ENCODE measurements at regions of chr15 and their contacts with region 1.

Region 1: GRCh38 chr15:34367101-34368081 is at the start of gene LPCAT4:
- DNase-seq: peak; percentile 87 to 93
- ATAC-seq: peak; percentile 94 to 96 (median 96)
- H3K4me3 ChIP-seq: peak within 1 kb of the TSS; percentile 98
- H3K27ac ChIP-seq: peak within 1 kb of the TSS; percentile 97
- H3K4me1 ChIP-seq: peaks cover 9% of the 10 kb centered on the region
- H3K27me3 ChIP-seq: no peaks in the 10 kb centered on the region
- CTCF ChIP-seq: peak; percentile 95
- total RNA-seq, gene LPCAT4: 8.4 to 13.1 (median 10.2) TPM

Region 2: DNA sequence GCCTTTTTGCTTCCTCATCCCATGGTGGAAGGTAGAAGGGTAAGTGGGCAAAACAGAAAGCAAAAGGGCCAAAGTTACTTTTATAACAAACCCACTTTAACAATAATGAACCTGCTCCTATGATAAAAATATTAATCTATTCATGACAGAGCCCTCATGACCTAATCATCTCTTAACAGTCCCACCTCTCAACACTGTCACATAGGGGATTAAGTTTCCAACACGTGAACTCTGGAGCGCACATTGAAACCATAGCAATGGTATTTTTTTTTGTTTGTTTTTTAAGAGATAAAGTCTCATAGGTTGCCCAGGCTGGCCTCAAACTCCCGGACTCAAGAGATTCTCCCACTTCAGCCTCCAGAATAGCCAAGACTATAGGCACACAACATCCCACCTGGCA is 188.2 kb before region 1 on chr15:
- intact Hi-C with region 1: no loop called
- DNase-seq: no peak
- ATAC-seq: no peak
- H3K4me3 ChIP-seq: no peak overlapping the region
- H3K27ac ChIP-seq: no peak overlapping the region
- H3K4me1 ChIP-seq: no peaks in the 10 kb centered on the region
- H3K27me3 ChIP-seq: no peaks in the 10 kb centered on the region
- CTCF ChIP-seq: no peak

Region 3: DNA sequence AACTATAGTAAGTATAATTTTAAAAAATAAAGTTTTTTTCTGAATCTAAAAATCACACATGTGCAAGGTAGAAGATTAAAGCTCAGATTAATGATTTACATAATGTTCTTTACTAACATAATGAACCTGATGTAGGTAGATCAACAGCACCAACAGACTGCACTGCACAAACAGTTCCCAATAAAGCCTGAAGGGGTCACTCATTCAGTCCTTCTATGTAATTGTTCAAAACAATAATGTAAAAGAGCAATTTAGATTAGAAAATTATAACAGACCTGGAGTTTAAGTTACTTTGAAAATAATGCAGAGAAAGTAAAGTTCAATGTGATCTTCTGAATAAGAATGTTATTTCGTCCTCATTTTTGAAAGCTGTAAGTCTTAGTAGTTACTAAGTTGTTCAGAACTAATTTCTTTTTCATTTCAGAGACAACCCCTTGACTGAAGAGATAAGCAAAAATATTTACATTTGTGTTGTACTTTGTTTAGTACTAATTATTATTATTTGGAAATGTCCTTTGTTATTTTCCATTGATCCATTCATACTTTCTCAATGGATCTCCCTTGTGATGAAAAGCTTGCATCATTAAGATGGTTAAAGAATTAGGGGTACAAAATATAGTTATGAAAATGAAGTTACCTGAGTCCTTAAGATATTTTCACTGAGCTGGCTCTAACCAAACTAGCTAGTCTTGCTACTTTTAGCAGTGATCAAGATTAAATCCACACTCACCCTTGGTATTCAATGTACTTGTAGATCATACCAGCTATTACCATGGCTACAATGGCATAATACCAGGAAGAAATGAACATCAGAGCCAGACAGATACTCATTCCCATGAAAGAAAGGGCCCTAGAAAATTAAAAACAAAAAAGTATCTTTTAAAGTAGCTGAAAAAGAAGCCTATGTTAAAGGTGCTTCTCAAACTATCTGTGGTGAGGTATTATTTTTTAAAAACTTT is 125.7 kb before region 1 on chr15:
- intact Hi-C with region 1: loop called in 1 of 2 experiments (anchors 1 kb)
- DNase-seq: no peak
- ATAC-seq: peak in 2 of 4 donors; percentile 46 to 65
- H3K4me3 ChIP-seq: no peak overlapping the region
- H3K27ac ChIP-seq: no peak overlapping the region
- H3K4me1 ChIP-seq: no peaks in the 10 kb centered on the region
- H3K27me3 ChIP-seq: no peaks in the 10 kb centered on the region
- CTCF ChIP-seq: peak; percentile 74

Region 4: DNA sequence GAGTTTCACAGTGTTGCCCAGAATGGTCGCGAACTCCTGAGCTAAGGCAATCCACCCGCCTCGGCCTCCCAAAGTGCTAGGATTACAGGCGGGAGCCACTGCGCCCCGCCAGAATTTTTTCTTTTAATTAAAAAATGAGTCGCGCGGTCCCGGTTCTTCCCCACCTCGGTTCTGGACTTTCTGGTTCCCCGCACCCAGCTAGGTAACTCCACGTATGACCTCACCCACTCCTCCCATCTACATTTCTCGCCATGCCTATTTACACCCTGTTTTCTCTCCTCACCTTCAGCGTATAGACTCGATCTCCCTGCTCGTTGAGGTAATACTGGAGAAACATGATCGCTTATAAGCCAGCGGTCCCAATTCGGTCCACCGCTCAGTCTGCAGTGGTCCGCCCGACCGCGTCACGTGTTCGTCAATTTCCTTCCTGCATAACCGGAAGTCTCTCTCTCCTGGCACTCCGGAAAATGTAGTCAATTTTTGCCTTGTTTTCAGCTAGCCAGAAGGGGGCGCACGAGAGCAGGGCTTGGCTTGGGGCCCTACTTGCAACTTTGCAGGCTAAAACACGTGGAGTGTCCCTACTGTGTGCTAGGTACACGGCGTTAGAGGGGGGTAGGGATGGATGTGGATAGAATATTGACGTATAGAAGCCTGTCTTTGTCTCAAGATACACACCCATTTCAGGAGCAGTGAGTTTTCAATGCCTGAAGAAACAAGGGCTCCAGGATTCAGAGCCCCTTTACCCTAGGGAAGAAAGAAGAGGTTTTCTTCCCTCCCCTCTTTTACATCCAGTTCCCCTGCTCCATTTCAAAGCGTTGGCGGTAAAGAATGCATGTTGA is 24.4 kb before region 1 on chr15 and contains the starts of genes NOP10 and NUTM1:
- intact Hi-C with region 1: loop called in 1 of 2 experiments (anchors 1 kb)
- DNase-seq: peak; percentile 90 to 95
- ATAC-seq: peak; percentile 94 to 97 (median 96)
- H3K4me3 ChIP-seq: peak within 1 kb of the TSS; percentile 84
- H3K27ac ChIP-seq: peak within 1 kb of the TSS; percentile 77
- H3K4me1 ChIP-seq: peaks cover 10% of the 10 kb centered on the region
- H3K27me3 ChIP-seq: no peaks in the 10 kb centered on the region
- CTCF ChIP-seq: peak; percentile 93
- total RNA-seq, gene NOP10: 123 to 146 (median 134) TPM
- total RNA-seq, gene NUTM1: not detected

Region 5: GRCh38 chr15:34442891-34443290 is 75.5 kb after region 1 on chr15:
- intact Hi-C with region 1: no loop called
- DNase-seq: no peak
- ATAC-seq: no peak
- H3K4me3 ChIP-seq: no peak overlapping the region
- H3K27ac ChIP-seq: no peak overlapping the region
- H3K4me1 ChIP-seq: peaks cover 3% of the 10 kb centered on the region
- H3K27me3 ChIP-seq: no peaks in the 10 kb centered on the region
- CTCF ChIP-seq: no peak

Region 6: GRCh38 chr15:34501131-34501530 is 133.7 kb after region 1 on chr15:
- intact Hi-C with region 1: no loop called
- DNase-seq: no peak
- ATAC-seq: no peak
- H3K4me3 ChIP-seq: no peak overlapping the region
- H3K27ac ChIP-seq: no peak overlapping the region
- H3K4me1 ChIP-seq: no peaks in the 10 kb centered on the region
- H3K27me3 ChIP-seq: peaks cover 0 to 36% (median 4%) of the 10 kb centered on the region in 3 donors
- CTCF ChIP-seq: no peak

Measured in psoas muscle (tissue), 8 donors.